Astrocyte of the cerebellum (primary cell): ENCODE measurements at regions of chr5 and their contacts with region 1.

Region 1: DNA sequence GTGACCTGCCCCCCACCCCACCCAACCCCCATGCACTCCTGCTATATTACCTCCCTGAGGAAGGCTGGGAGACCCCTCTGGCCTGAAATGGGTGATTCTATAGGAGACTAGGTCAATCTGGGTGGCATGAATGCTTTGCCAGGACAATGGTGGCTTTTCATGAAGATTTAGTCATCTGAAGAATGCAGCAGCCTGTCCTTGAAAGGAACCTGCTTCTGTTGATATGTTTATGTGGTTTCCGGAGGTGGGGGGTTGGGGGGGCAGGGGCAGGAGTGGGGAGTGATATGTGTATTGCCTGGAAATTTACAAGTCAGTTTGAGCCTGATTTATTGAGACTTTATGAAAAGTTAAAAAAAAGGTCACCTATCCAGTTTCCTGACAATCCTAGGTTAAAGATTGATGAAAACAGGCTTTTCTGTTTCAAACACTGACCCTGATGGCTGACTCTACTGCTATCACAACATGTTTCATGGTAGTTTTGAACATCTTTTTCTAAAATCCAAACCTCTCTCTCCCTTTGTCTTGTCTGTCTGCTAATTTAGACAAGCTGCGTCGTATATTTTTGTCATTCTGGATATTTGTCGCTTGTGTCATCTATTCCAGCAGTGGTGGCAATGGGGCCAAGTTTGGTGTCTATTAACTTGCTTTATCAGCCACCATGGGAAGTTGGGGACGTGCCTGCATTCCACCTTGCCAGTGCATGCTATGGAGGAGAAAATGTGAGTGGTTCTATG is 153.7 kb upstream of the EGFLAM start:
- DNase-seq: no peak
- H3K4me3 ChIP-seq: no peak overlapping the region
- CTCF ChIP-seq: no peak

Region 2: GRCh38 chr5:38208782-38209378 is 104.2 kb after region 1 on chr5:
- in situ Hi-C with region 1: loop called (anchors 5 kb)
- DNase-seq: peak; percentile 24
- H3K4me3 ChIP-seq: no peak overlapping the region
- CTCF ChIP-seq: peak; percentile 59